Naive thymus-derived CD8-positive, alpha-beta T cell (primary cell): ENCODE measurements at regions of chr1 and their contacts with region 1.

Region 1: GRCh38 chr1:117059678-117060440 is at the start of gene TTF2:
- DNase-seq: peak; percentile 87 to 99 (median 98)
- ATAC-seq: peak; percentile 90 to 91
- H3K4me3 Mint-ChIP-seq: no peak within 1 kb of the TSS
- H3K27ac Mint-ChIP-seq: peak within 1 kb of the TSS in 4 of 10 donors; percentile 19 to 86 (median 62)
- H3K4me1 Mint-ChIP-seq: peaks cover 9 to 48% (median 27%) of the 10 kb centered on the region in 4 donors
- H3K27me3 Mint-ChIP-seq: no peaks in the 10 kb centered on the region
- polyA plus RNA-seq, gene TTF2: 10.8 to 13.4 (median 11.7) TPM

Region 2: GRCh38 chr1:116737020-116737854 is 322.6 kb before region 1 on chr1:
- POLR2A ChIA-PET with region 1: interaction called, 23 read pairs
- DNase-seq: peak; percentile 46 to 87 (median 78)
- ATAC-seq: peak; percentile 57 to 62
- H3K4me3 Mint-ChIP-seq: peak overlapping the region; percentile 63 to 82 (median 76)
- H3K27ac Mint-ChIP-seq: peak overlapping the region; percentile 94 to 99 (median 98)
- H3K4me1 Mint-ChIP-seq: peaks cover 33 to 48% (median 45%) of the 10 kb centered on the region in 4 donors
- H3K27me3 Mint-ChIP-seq: no peaks in the 10 kb centered on the region

Region 3: GRCh38 chr1:116754198-116754977 is 305.5 kb before region 1 on chr1 and contains the start of gene CD2:
- POLR2A ChIA-PET with region 1: interaction called, 10 read pairs
- DNase-seq: peak in 9 of 10 donors; percentile 31 to 76 (median 58)
- ATAC-seq: peak; percentile 84 to 90
- H3K4me3 Mint-ChIP-seq: peak within 1 kb of the TSS; percentile 92 to 100 (median 98)
- H3K27ac Mint-ChIP-seq: peak within 1 kb of the TSS; percentile 96 to 99 (median 98)
- H3K4me1 Mint-ChIP-seq: peaks cover 22 to 42% (median 35%) of the 10 kb centered on the region in 4 donors
- H3K27me3 Mint-ChIP-seq: no peaks in the 10 kb centered on the region
- polyA plus RNA-seq, gene CD2: 197 to 240 (median 222) TPM

Region 4: GRCh38 chr1:116763787-116764465 is 295.9 kb before region 1 on chr1:
- POLR2A ChIA-PET with region 1: interaction called, 23 read pairs
- DNase-seq: peak in 4 of 10 donors; percentile 27 to 38 (median 32)
- ATAC-seq: peak; percentile 6 to 15
- H3K4me3 Mint-ChIP-seq: peak overlapping the region; percentile 68 to 91 (median 88)
- H3K27ac Mint-ChIP-seq: peak overlapping the region; percentile 97 to 99 (median 98)
- H3K4me1 Mint-ChIP-seq: peaks cover 58 to 98% (median 96%) of the 10 kb centered on the region in 4 donors
- H3K27me3 Mint-ChIP-seq: no peaks in the 10 kb centered on the region

Region 5: GRCh38 chr1:116769561-116769977 is 290.3 kb before region 1 on chr1:
- POLR2A ChIA-PET with region 1: interaction called, 23 read pairs
- DNase-seq: peak; percentile 29 to 91 (median 78)
- ATAC-seq: peak; percentile 85 to 91
- H3K4me3 Mint-ChIP-seq: peak overlapping the region; percentile 34 to 82 (median 74)
- H3K27ac Mint-ChIP-seq: peak overlapping the region; percentile 93 to 99 (median 98)
- H3K4me1 Mint-ChIP-seq: peaks cover 47 to 85% (median 84%) of the 10 kb centered on the region in 4 donors
- H3K27me3 Mint-ChIP-seq: no peaks in the 10 kb centered on the region

Region 6: DNA sequence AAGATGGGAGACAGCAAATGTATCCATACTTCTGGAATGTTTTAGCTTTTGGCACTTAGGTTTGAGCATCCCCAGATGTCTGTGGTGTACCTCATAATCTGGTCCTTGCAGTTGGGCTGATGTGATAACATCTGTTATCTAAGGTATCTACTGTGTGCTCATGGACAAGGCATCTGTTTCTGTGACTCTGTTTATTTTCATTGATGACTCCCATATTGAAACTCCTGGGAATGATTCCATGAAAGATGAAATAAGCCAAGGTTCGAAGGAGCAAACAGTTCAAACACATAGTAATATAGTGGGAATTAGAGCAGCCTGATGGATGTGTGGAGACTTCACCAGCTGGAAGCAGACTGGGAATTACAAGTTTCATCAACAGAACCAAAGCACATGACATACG is 82.3 kb after region 1 on chr1:
- POLR2A ChIA-PET with region 1: no interaction called
- DNase-seq: no peak
- ATAC-seq: no peak
- H3K4me3 Mint-ChIP-seq: no peak overlapping the region
- H3K27ac Mint-ChIP-seq: no peak overlapping the region
- H3K4me1 Mint-ChIP-seq: no peaks in the 10 kb centered on the region
- H3K27me3 Mint-ChIP-seq: peaks cover 7 to 14% (median 9%) of the 10 kb centered on the region in 5 donors

Region 7: DNA sequence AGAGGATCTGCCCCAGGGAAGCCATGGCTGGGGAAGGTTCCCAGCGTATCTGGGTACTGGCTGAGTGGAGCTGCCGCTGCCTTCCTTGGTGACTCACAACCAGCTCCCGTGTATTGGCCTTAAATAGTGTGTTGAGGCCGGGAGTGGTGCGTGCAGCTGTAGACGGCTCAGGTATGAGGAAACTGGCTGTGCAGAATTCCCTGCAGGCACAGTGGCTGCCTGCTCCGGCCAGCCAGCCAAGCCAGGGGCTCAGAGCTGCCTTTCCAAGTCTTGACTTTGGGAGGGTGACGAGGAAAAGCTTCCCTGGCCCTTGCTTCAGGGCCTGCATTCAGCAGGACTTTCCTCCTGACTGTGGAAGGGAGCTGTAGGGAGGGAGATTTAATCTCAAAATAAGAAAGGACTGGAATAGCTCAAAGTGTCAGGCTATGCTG is 151.0 kb after region 1 on chr1 and contains the start of gene VTCN1:
- POLR2A ChIA-PET with region 1: no interaction called
- DNase-seq: no peak
- ATAC-seq: no peak
- H3K4me3 Mint-ChIP-seq: no peak within 1 kb of the TSS
- H3K27ac Mint-ChIP-seq: no peak within 1 kb of the TSS
- H3K4me1 Mint-ChIP-seq: no peaks in the 10 kb centered on the region
- H3K27me3 Mint-ChIP-seq: peaks cover 6 to 18% (median 14%) of the 10 kb centered on the region in 5 donors
- polyA plus RNA-seq, gene VTCN1: not detected